MCF 10A (cell line): ENCODE measurements at regions of chr4 and their contacts with region 1.

Region 1: GRCh38 chr4:77156533-77156911 is 485 bp upstream of the CCNG2 start:
- DNase-seq: peak; percentile 100
- H3K4me3 Mint-ChIP-seq: peak overlapping the region; percentile 94
- H3K27ac Mint-ChIP-seq: peak overlapping the region; percentile 98
- H3K4me1 Mint-ChIP-seq: peaks cover 16% of the 10 kb centered on the region
- H3K27me3 Mint-ChIP-seq: no peaks in the 10 kb centered on the region
- CTCF ChIP-seq: no peak

Region 2: GRCh38 chr4:77052352-77052751 is 104.2 kb before region 1 on chr4:
- CTCF ChIA-PET with region 1: interaction called, 3 read pairs
- POLR2A ChIA-PET with region 1: interaction called, 14 read pairs
- intact Hi-C with region 1: no loop called
- DNase-seq: peak; percentile 75
- H3K4me3 Mint-ChIP-seq: no peak overlapping the region
- H3K27ac Mint-ChIP-seq: peak overlapping the region; percentile 61
- H3K4me1 Mint-ChIP-seq: peaks cover 21% of the 10 kb centered on the region
- H3K27me3 Mint-ChIP-seq: no peaks in the 10 kb centered on the region
- CTCF ChIP-seq: peak; percentile 45

Region 3: DNA sequence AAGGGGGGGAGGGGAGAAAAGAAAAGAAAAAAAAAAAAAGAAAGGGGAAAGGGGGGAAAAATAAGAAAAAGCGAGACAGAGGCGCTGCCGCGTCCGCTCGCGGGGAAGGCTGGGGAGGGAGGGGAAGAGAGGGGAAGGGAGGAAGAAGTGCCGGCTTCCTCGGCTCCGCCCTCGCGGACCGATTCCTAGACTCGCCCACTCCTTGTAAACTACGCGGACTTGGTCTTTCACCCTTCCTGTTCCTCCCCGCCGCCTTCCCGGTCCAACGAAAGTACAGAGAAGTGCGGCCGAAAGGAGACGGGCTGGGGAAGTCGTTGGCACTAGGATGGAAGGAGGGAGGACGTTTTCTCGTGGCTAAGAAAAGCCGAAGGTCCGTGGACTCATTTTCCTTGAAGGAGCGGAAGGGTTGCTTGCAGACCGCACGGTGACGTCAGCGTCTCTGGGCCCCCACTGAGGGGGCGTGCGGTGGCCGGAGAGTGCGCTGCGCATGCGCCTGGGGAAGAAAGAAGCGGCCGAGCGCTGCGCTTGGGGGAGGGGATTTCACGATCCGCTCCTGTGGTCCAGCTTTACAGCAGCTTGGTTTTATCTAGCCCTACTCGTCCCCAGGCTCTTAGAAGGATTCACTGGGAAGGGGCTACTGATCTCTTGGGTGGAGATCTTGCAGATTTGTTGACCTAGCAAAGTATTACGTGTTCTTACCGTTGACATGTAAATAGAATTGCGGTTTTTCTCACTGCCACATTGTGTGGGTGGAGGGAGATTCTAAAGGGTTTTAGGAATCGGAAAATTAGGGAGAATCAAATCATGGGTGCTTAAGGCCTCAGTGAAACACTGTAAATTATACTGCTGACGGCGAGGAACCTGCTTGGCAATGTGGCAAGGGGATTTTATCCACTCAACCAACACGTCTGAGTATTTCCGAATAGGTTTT is 80.4 kb before region 1 on chr4 and contains the start of gene CCNI:
- CTCF ChIA-PET with region 1: no interaction called
- POLR2A ChIA-PET with region 1: interaction called, 223 read pairs
- intact Hi-C with region 1: loop called (anchors 2 kb)
- DNase-seq: peak; percentile 95
- H3K4me3 Mint-ChIP-seq: no peak within 1 kb of the TSS
- H3K27ac Mint-ChIP-seq: no peak within 1 kb of the TSS
- H3K4me1 Mint-ChIP-seq: peaks cover 13% of the 10 kb centered on the region
- H3K27me3 Mint-ChIP-seq: no peaks in the 10 kb centered on the region
- CTCF ChIP-seq: no peak
- total RNA-seq, gene CCNI: 297 and 368 TPM in 2 replicates

Region 4: GRCh38 chr4:77110730-77111129 is 45.8 kb before region 1 on chr4:
- CTCF ChIA-PET with region 1: no interaction called
- POLR2A ChIA-PET with region 1: interaction called, 248 read pairs
- intact Hi-C with region 1: no loop called
- DNase-seq: peak; percentile 55
- H3K4me3 Mint-ChIP-seq: no peak overlapping the region
- H3K27ac Mint-ChIP-seq: no peak overlapping the region
- H3K4me1 Mint-ChIP-seq: peaks cover 10% of the 10 kb centered on the region
- H3K27me3 Mint-ChIP-seq: no peaks in the 10 kb centered on the region
- CTCF ChIP-seq: no peak

Region 5: DNA sequence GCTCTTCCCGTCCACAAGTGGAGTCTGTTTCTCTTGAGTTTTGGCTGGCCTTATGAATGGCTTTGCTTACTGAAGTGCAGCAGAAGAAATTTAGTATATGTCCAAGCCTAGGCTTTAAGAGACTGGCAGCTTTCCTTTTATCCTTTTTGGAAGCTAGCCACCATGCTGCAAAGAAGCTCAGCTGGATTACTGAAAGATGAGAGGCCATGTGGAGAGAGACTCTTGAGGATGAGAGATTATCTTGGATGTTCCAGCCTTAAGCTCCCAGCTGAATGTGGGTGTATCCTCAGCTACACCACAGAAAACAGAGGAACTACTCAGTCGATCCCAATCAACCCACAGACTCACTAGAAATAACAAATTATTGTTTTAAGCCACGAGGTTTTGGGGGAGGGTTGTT is 13.0 kb after region 1 on chr4:
- CTCF ChIA-PET with region 1: no interaction called
- POLR2A ChIA-PET with region 1: interaction called, 12 read pairs
- intact Hi-C with region 1: no loop called
- DNase-seq: no peak
- H3K4me3 Mint-ChIP-seq: no peak overlapping the region
- H3K27ac Mint-ChIP-seq: no peak overlapping the region
- H3K4me1 Mint-ChIP-seq: peaks cover 20% of the 10 kb centered on the region
- H3K27me3 Mint-ChIP-seq: no peaks in the 10 kb centered on the region
- CTCF ChIP-seq: no peak

Region 6: GRCh38 chr4:77493120-77493752 is 336.7 kb after region 1 on chr4:
- CTCF ChIA-PET with region 1: no interaction called
- POLR2A ChIA-PET with region 1: no interaction called
- intact Hi-C with region 1: no loop called
- DNase-seq: no peak
- H3K4me3 Mint-ChIP-seq: no peak overlapping the region
- H3K27ac Mint-ChIP-seq: no peak overlapping the region
- H3K4me1 Mint-ChIP-seq: peaks cover 10% of the 10 kb centered on the region
- H3K27me3 Mint-ChIP-seq: no peaks in the 10 kb centered on the region
- CTCF ChIP-seq: no peak